Natural killer cell (primary cell): ENCODE measurements at regions of chr1 and their contacts with region 1.

Region 1: DNA sequence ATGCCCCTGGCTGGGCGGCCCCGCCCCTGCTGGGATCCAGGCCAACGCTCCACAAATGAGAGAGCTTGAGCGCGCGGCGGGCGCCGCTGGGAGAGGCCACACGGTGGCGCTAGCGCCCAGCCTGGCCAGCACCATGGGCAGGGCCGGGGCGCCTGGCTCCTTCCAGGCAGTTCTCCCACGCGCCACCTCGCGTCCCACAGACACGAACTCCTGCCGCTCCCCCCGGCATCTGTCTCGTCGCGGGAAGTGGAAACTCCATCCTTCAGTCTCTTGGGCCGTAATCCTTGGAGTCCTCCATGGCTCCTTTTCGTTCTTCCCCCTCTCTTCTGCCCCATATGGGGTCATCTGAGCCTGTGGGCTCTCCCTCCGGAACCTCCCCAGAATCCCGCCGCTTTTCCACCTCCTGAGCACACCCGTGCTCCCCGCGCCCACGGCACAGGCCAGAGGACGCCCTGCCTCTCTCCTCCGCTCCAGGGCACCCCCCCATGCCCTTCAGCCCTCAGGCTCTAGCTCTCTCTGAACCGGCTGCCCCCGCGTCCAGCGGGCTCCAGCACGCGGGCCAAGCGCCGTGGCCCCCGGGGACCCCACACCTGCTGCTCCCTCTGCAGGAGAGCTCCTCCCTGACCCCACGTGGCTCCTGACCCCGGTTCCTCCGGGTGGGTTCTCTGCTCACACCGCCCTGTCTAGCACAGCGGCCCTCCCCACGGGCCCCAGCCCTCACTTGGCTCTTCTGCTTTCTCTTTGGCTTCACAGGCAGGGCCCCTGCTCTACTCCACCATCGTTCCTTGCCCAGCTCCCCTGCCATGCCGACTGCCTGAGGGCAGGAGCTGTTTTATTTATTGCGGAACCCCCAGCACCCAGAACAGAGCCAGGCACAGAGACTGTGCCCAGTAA is 31.9 kb upstream of the EDN2 start:
- DNase-seq: peak; percentile 67 to 68
- ATAC-seq: peak; percentile 87 to 96 (median 96)
- H3K4me3 ChIP-seq: peak overlapping the region; percentile 22
- H3K4me3 Mint-ChIP-seq: peak overlapping the region; percentile 84
- H3K27ac ChIP-seq: no peak overlapping the region
- H3K27ac Mint-ChIP-seq: no peak overlapping the region
- H3K4me1 ChIP-seq: peaks cover 13% of the 10 kb centered on the region
- H3K4me1 Mint-ChIP-seq: peaks cover 11 to 14% of the 10 kb centered on the region in 2 donors
- H3K27me3 ChIP-seq: no peaks in the 10 kb centered on the region
- H3K27me3 Mint-ChIP-seq: no peaks in the 10 kb centered on the region
- CTCF ChIP-seq: peak; percentile 85

Region 2: DNA sequence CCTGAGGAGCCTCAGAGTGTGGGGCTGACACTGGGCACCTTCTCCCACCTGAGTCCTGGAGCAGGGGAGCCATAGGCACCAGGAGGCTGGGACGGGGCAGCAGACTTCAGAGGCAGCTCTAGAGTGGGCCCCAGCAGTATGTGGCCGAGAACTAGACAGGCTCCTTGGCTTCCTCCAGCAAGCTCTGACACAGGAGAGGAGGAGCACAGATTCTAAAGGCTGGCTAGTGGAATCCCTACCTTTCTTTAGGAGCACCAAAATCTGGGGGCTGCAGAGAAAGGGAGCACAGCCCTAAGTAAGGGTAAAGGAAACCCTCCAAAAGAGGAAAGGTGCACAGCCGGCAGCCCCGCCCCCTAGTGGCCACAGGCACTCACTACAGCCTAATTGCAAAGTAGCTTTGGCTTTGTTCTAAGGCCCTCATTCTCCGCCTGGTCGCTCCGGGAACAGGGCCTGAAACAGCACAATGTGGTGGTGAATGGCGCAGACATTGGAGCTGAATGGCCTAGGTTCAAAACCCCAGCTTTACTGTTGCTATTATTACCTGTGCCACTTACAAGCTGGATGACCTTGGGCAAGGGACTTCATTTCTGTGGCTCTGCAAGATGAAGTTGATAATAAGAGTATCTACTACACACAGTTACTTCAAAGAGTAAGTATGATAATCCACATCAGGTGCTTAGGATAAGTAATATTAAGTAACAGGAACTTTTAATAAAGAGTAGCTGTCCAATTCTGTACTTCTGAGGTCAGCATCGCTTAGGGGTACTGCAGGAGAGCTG is 656.9 kb after region 1 on chr1:
- intact Hi-C with region 1: loop called (anchors 1 kb)
- DNase-seq: peak; percentile 65 to 74
- ATAC-seq: peak; percentile 75 to 86 (median 83)
- H3K4me3 ChIP-seq: no peak overlapping the region
- H3K4me3 Mint-ChIP-seq: no peak overlapping the region
- H3K27ac ChIP-seq: no peak overlapping the region
- H3K27ac Mint-ChIP-seq: no peak overlapping the region
- H3K4me1 ChIP-seq: no peaks in the 10 kb centered on the region
- H3K4me1 Mint-ChIP-seq: peaks cover 0 to 4% of the 10 kb centered on the region in 2 donors
- H3K27me3 ChIP-seq: no peaks in the 10 kb centered on the region
- H3K27me3 Mint-ChIP-seq: no peaks in the 10 kb centered on the region
- CTCF ChIP-seq: peak; percentile 93